HCT116 (cell line): ENCODE measurements at regions of chr3 and their contacts with region 1.

Region 1: DNA sequence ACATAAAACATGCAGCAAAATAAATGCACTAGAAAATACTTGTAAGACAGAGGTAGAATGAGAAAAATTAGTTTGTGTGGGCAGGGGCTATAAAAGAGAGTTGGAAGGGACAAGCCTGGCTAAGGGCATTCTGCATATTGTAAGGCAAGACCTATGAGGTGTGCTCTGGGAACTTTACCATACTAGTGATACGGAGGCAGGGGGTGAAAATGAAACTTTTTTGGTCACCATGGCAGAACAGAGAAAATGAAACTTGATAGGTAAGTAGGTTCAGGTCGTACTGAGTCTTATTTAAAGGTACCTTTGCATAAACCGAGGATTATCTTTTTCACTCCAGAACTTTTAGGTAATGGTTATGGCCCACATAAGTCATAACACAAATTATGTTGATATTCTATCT is 74.7 kb upstream of the ACKR4 start:
- DNase-seq: no peak
- ATAC-seq: no peak
- H3K4me3 ChIP-seq: no peak overlapping the region
- H3K27ac ChIP-seq: no peak overlapping the region
- H3K4me1 ChIP-seq: no peaks in the 10 kb centered on the region
- H3K27me3 ChIP-seq: no peaks in the 10 kb centered on the region
- CTCF ChIP-seq: no peak
- POLR2A ChIP-seq: no peak
- RAD21 ChIP-seq: no peak

Region 2: GRCh38 chr3:132535575-132536441 is 13.5 kb after region 1 on chr3:
- CTCF ChIA-PET with region 1: interaction called, 11 read pairs
- POLR2A ChIA-PET with region 1: no interaction called
- RAD21 ChIA-PET with region 1: no interaction called
- intact Hi-C with region 1: no loop called
- DNase-seq: peak; percentile 46
- ATAC-seq: peak; percentile 89
- H3K4me3 ChIP-seq: no peak overlapping the region
- H3K27ac ChIP-seq: no peak overlapping the region
- H3K4me1 ChIP-seq: no peaks in the 10 kb centered on the region
- H3K27me3 ChIP-seq: no peaks in the 10 kb centered on the region
- CTCF ChIP-seq: peak; percentile 50 to 69 (median 55); a peak in 5 of 6 replicates
- POLR2A ChIP-seq: no peak
- RAD21 ChIP-seq: peak; percentile 66

Region 3: GRCh38 chr3:132930916-132931315 is 408.6 kb after region 1 on chr3:
- CTCF ChIA-PET with region 1: no interaction called
- POLR2A ChIA-PET with region 1: no interaction called
- RAD21 ChIA-PET with region 1: no interaction called
- intact Hi-C with region 1: no loop called
- DNase-seq: no peak
- ATAC-seq: no peak
- H3K4me3 ChIP-seq: no peak overlapping the region
- H3K27ac ChIP-seq: no peak overlapping the region
- H3K4me1 ChIP-seq: no peaks in the 10 kb centered on the region
- H3K27me3 ChIP-seq: peaks cover 20% of the 10 kb centered on the region
- CTCF ChIP-seq: no peak
- POLR2A ChIP-seq: no peak
- RAD21 ChIP-seq: no peak